Caco-2 (cell line): ENCODE measurements at regions of chr1 and their contacts with region 1.

Region 1: GRCh38 chr1:211643324-211644212 is 31.9 kb downstream of the NEK2 start:
- DNase-seq: peak; percentile 80 to 93
- H3K4me3 ChIP-seq: no peak overlapping the region
- H3K4me3 Mint-ChIP-seq: peak overlapping the region; percentile 58
- H3K27ac Mint-ChIP-seq: peak overlapping the region; percentile 89
- H3K4me1 ChIP-seq: peaks cover 66% of the 10 kb centered on the region
- H3K4me1 Mint-ChIP-seq: peaks cover 41% of the 10 kb centered on the region
- H3K27me3 ChIP-seq: no peaks in the 10 kb centered on the region
- H3K27me3 Mint-ChIP-seq: no peaks in the 10 kb centered on the region
- CTCF ChIP-seq: peak in 1 of 2 experiments; percentile 15

Region 2: GRCh38 chr1:211596418-211597181 is 47.0 kb before region 1 on chr1:
- CTCF ChIA-PET with region 1: interaction called, 13 read pairs
- POLR2A ChIA-PET with region 1: no interaction called
- intact Hi-C with region 1: no loop called
- DNase-seq: no peak
- H3K4me3 ChIP-seq: no peak overlapping the region
- H3K4me3 Mint-ChIP-seq: no peak overlapping the region
- H3K27ac Mint-ChIP-seq: no peak overlapping the region
- H3K4me1 ChIP-seq: no peaks in the 10 kb centered on the region
- H3K4me1 Mint-ChIP-seq: peaks cover 17% of the 10 kb centered on the region
- H3K27me3 ChIP-seq: no peaks in the 10 kb centered on the region
- H3K27me3 Mint-ChIP-seq: no peaks in the 10 kb centered on the region
- CTCF ChIP-seq: no peak

Region 3: GRCh38 chr1:211625040-211625439 is 18.5 kb before region 1 on chr1:
- CTCF ChIA-PET with region 1: interaction called, 12 read pairs
- POLR2A ChIA-PET with region 1: interaction called, 6 read pairs
- intact Hi-C with region 1: no loop called
- DNase-seq: peak; percentile 63 to 67
- H3K4me3 ChIP-seq: no peak overlapping the region
- H3K4me3 Mint-ChIP-seq: no peak overlapping the region
- H3K27ac Mint-ChIP-seq: no peak overlapping the region
- H3K4me1 ChIP-seq: no peaks in the 10 kb centered on the region
- H3K4me1 Mint-ChIP-seq: peaks cover 9% of the 10 kb centered on the region
- H3K27me3 ChIP-seq: no peaks in the 10 kb centered on the region
- H3K27me3 Mint-ChIP-seq: no peaks in the 10 kb centered on the region
- CTCF ChIP-seq: peak; percentile 40

Region 4: GRCh38 chr1:211667065-211667617 is 23.6 kb after region 1 on chr1:
- CTCF ChIA-PET with region 1: interaction called, 6 read pairs
- POLR2A ChIA-PET with region 1: interaction called, 4 read pairs
- intact Hi-C with region 1: loop called (anchors 1 kb)
- DNase-seq: peak in 1 of 2 experiments; percentile 61
- H3K4me3 ChIP-seq: no peak overlapping the region
- H3K4me3 Mint-ChIP-seq: no peak overlapping the region
- H3K27ac Mint-ChIP-seq: peak overlapping the region; percentile 10
- H3K4me1 ChIP-seq: peaks cover 17% of the 10 kb centered on the region
- H3K4me1 Mint-ChIP-seq: peaks cover 7% of the 10 kb centered on the region
- H3K27me3 ChIP-seq: no peaks in the 10 kb centered on the region
- H3K27me3 Mint-ChIP-seq: no peaks in the 10 kb centered on the region
- CTCF ChIP-seq: no peak

Region 5: DNA sequence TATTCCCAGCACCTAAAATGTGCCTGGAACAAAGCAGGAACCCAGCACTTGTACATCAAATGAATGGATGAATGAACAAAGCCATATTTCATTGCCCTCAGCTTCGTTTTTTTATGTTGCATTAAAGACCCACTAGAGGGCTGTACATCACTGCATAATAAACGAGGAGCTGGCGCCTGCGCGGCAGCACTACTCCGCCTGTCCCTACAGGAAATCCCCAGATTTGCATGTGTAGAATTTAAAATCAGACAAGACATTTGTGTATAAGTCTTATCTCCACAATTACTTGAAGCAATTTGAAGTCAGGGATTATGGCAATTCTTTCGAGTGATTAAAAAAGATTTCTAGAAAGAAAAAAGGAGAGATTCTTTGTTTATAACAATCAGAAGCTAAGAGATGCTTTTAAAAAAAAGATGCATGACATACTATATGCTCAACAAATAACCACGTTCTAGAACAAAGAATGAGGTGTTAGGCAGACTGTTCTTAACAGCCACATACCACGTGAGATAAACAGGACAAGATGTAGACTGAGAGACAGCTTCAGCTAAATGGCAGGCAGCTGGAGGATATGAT is 37.3 kb after region 1 on chr1:
- CTCF ChIA-PET with region 1: no interaction called
- POLR2A ChIA-PET with region 1: no interaction called
- intact Hi-C with region 1: no loop called
- DNase-seq: peak; percentile 74 to 78
- H3K4me3 ChIP-seq: no peak overlapping the region
- H3K4me3 Mint-ChIP-seq: no peak overlapping the region
- H3K27ac Mint-ChIP-seq: no peak overlapping the region
- H3K4me1 ChIP-seq: no peaks in the 10 kb centered on the region
- H3K4me1 Mint-ChIP-seq: peaks cover 14% of the 10 kb centered on the region
- H3K27me3 ChIP-seq: no peaks in the 10 kb centered on the region
- H3K27me3 Mint-ChIP-seq: no peaks in the 10 kb centered on the region
- CTCF ChIP-seq: peak; percentile 68 to 86